A549 (cell line): ENCODE measurements at regions of chr16 and their contacts with region 1.

Region 1: GRCh38 chr16:425082-425718 is at the start of gene RAB11FIP3:
- DNase-seq: peak; percentile 82 to 87
- ATAC-seq: peak; percentile 86 to 91
- H3K4me3 ChIP-seq: peak within 1 kb of the TSS; percentile 72
- H3K27ac ChIP-seq: peak within 1 kb of the TSS; percentile 85 to 91
- H3K4me1 ChIP-seq: peaks cover 24% of the 10 kb centered on the region
- CTCF ChIP-seq: peak; percentile 17; the same call in 1 of the 3 replicates
- EP300 ChIP-seq: no peak
- POLR2A ChIP-seq: peak; percentile 79
- RAD21 ChIP-seq: no peak; a peak in 2 of 5 replicates
- polyA plus RNA-seq, gene RAB11FIP3: 6.7 and 9.7 TPM in 2 replicates

Region 2: GRCh38 chr16:391885-392335 is 33.3 kb before region 1 on chr16:
- CTCF ChIA-PET with region 1: interaction called, 14 read pairs
- POLR2A ChIA-PET with region 1: no interaction called
- DNase-seq: peak; percentile 76 to 83
- ATAC-seq: peak; percentile 70 to 82
- H3K4me3 ChIP-seq: no peak overlapping the region
- H3K27ac ChIP-seq: no peak overlapping the region
- H3K4me1 ChIP-seq: peaks cover 8% of the 10 kb centered on the region; the same call in 1 of the 3 replicates
- CTCF ChIP-seq: peak; percentile 54
- EP300 ChIP-seq: no peak
- POLR2A ChIP-seq: no peak
- RAD21 ChIP-seq: peak; percentile 69 to 90

Region 3: GRCh38 chr16:401468-402348 is 23.5 kb before region 1 on chr16 and contains the start of gene DECR2:
- CTCF ChIA-PET with region 1: interaction called, 14 read pairs
- POLR2A ChIA-PET with region 1: interaction called, 5 read pairs
- DNase-seq: peak; percentile 80 to 93
- ATAC-seq: peak; percentile 57 to 76
- H3K4me3 ChIP-seq: peak within 1 kb of the TSS; percentile 64
- H3K27ac ChIP-seq: peak within 1 kb of the TSS; percentile 81 to 88
- H3K4me1 ChIP-seq: peaks cover 37% of the 10 kb centered on the region
- CTCF ChIP-seq: peak; percentile 67
- EP300 ChIP-seq: no peak
- POLR2A ChIP-seq: peak; percentile 86
- RAD21 ChIP-seq: peak; percentile 35 to 47; a peak in 3 of 5 replicates
- polyA plus RNA-seq, gene DECR2: 15.5 and 17.9 TPM in 2 replicates

Region 4: GRCh38 chr16:508884-509736 is 83.9 kb after region 1 on chr16:
- CTCF ChIA-PET with region 1: no interaction called
- POLR2A ChIA-PET with region 1: no interaction called
- DNase-seq: no peak
- ATAC-seq: peak in 1 of 2 experiments; percentile 53; a peak in 2 of 6 replicates
- H3K4me3 ChIP-seq: no peak overlapping the region
- H3K27ac ChIP-seq: no peak overlapping the region
- H3K4me1 ChIP-seq: no peaks in the 10 kb centered on the region
- CTCF ChIP-seq: no peak
- EP300 ChIP-seq: no peak
- POLR2A ChIP-seq: no peak
- RAD21 ChIP-seq: no peak